ENCODE measurements at regions of chr3 and their contacts with region 1.

Region 1: DNA sequence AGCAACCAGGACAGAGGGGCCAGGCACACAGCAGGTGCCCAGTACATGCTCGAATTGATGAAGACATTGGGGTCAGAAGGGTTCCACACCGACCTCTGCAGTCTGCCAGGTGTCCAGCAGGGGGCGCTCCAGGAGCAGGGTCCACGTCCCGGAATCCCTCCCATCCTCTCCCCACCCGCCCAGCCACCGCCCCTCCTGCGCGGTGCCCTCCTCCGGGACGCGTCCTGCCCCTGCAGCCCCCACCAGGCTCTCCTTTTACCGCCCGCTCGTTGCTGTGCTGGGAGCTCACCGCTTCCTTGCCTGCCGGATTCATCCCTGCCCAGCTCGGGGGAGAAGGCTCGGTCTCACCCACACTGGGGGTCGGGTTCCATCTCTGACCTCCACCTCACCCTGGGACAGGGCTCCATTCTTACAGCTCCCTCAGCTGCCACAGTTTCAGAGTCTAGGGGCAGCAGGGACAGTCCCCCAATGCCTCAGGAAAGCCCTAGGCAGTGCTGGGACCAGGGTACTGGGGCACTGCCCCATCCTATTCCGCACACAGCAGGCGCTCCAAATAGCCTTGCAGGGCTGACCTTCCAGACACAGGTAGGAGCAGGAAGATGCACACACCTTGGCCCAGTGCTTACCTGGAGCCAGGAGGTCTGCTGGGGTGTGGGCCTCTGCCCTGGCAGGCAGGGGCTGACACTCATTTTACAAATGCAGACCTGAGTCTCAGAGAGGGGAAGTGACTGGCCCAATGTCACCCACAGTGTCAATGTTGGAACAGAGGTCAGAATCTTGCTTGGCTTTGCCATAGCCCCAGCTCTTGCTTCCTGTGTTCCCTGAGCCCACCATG is 31.0 kb downstream of the GRIP2 start:
- DNase-seq: peak; percentile 76 to 81
- H3K4me3 ChIP-seq: peak overlapping the region in 1 of 4 donors; percentile 3
- H3K27ac ChIP-seq: no peak overlapping the region
- H3K4me1 ChIP-seq: peaks cover 0 to 6% (median 2%) of the 10 kb centered on the region in 4 donors
- H3K27me3 ChIP-seq: no peaks in the 10 kb centered on the region
- CTCF ChIP-seq: peak in 5 of 7 experiments; percentile 48 to 96 (median 86)
- EP300 ChIP-seq: no peak
- POLR2A ChIP-seq: no peak

Region 2: DNA sequence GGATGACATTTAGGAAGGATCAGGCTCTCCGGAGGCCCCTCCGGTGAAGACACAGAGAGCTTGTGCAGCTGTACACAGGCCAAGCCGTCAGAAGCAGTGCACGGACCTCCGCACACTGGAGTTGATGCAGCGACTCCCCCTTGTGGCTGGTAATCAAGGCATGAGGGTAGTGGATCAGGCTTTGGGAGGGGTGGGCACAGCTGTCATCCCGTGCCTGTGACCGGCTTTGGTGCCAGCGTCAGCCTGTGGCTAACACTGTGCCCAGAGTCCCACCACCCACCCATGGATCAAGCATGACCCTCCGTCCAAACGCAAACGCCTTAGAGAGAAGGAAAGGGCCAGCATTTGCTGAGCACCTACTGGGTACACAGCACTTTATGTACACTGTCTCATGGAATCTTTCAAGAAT is 39.1 kb after region 1 on chr3:
- intact Hi-C with region 1: loop called (anchors 5 kb)
- DNase-seq: peak; percentile 75 to 89
- H3K4me3 ChIP-seq: no peak overlapping the region
- H3K27ac ChIP-seq: no peak overlapping the region
- H3K4me1 ChIP-seq: peaks cover 5 to 16% (median 12%) of the 10 kb centered on the region in 4 donors
- H3K27me3 ChIP-seq: peaks cover 0 to 31% (median 0%) of the 10 kb centered on the region in 3 donors
- CTCF ChIP-seq: peak in 5 of 7 experiments; percentile 42 to 72 (median 56)
- EP300 ChIP-seq: no peak
- POLR2A ChIP-seq: no peak

Measured in stomach (tissue), 19 donors.